GM18951 (cell line): ENCODE measurements at regions of chr7 and their contacts with region 1.

Region 1: GRCh38 chr7:23570592-23571200 is 26.5 kb upstream of the CCDC126 start:
- POLR2A ChIP-seq: no peak

Region 2: GRCh38 chr7:23445326-23445725 is 125.4 kb before region 1 on chr7:
- in situ Hi-C with region 1: no loop called
- POLR2A ChIP-seq: no peak

Region 3: DNA sequence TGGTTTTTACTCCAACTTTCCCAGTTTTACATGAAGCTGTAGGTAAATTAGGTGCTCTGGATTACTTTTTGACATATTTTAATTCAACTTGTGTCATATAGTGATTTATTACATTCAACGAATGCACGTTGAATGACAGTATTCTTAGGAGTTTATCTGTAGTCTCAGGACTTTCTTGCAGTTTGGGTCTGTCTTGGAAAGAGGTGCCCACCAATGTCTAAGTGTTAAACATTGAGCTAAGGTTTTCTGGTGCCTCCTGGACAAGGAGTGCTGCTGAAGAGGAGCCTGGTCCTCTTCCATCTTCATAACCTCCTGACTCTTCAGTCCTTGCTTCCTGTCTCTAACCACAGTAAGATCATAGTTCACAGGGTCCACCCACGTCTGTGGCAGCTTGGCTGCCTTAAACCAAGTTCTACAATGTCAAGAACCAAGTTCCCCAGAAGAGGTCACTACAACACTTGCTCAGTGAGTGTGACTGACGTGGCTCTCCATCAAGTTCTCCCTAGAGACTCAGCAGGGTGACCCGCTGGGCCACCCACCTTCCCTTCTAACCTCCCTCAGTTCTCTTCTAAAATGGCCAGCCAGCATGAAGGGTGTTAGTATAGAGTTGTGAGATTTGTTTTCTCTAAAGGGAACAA is 719.4 kb after region 1 on chr7:
- in situ Hi-C with region 1: loop called (anchors 25 kb)
- POLR2A ChIP-seq: no peak

Region 4: GRCh38 chr7:24346129-24346528 is 775.4 kb after region 1 on chr7:
- in situ Hi-C with region 1: no loop called
- POLR2A ChIP-seq: no peak

Region 5: DNA sequence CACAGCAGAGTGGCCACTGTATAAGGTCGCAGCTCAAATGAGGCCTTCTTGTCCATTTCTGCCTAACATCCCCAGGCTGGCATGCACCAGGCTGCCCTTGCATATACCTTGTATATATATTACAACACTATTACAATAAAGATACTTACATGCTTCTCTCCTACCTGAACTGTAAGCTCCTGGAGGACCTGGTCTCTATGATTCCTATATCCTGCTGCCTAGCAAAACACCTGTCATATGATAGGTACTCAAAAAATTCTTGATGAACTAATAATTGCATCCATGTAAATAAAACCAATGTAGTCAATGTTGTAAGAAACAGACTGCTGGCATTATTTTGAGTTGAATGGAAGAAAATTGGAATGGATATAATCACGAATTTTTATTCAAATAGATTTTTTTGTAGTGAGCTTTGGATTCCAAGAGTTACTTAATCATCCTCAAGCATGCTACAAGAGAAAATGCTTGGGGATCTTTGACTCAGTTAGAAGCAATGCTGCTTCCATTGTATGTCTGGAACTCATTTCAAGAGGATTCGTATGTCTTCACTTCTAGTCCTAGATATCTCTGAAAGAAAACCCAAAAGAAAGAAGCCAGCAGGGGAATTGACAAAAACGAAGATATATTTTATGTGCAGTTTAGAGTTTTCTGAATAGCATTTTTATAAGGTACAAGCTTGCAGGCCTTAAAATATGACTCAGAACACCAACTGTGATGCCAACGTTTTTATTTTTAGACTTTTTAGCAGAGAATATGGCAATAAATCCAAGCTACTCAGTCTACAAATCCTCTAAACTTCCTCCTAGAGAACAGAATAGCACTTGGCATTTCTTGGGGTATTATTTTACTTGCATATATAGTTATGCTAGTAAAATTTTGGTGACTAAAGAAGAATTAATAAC is 1356.2 kb after region 1 on chr7:
- in situ Hi-C with region 1: no loop called
- POLR2A ChIP-seq: no peak